ENCODE measurements at regions of chr17 and their contacts with region 1.

Region 1: GRCh38 chr17:2521257-2521656 is 9.6 kb upstream of the METTL16 start:
- DNase-seq: no peak
- H3K4me3 ChIP-seq: no peak overlapping the region
- H3K27ac ChIP-seq: no peak overlapping the region
- H3K4me1 ChIP-seq: no peaks in the 10 kb centered on the region
- H3K27me3 ChIP-seq: no peaks in the 10 kb centered on the region
- CTCF ChIP-seq: no peak

Region 2: GRCh38 chr17:2580661-2581060 is 59.4 kb after region 1 on chr17:
- CTCF ChIA-PET with region 1: no interaction called
- dilution Hi-C with region 1: loop called (anchors 5 kb)
- in situ Hi-C with region 1: no loop called
- intact Hi-C with region 1: no loop called
- DNase-seq: no peak
- H3K4me3 ChIP-seq: no peak overlapping the region
- H3K27ac ChIP-seq: no peak overlapping the region
- H3K4me1 ChIP-seq: no peaks in the 10 kb centered on the region
- H3K27me3 ChIP-seq: no peaks in the 10 kb centered on the region
- CTCF ChIP-seq: no peak

Region 3: GRCh38 chr17:2624292-2624731 is 103.1 kb after region 1 on chr17:
- CTCF ChIA-PET with region 1: no interaction called
- dilution Hi-C with region 1: loop called (anchors 5 kb)
- in situ Hi-C with region 1: no loop called
- intact Hi-C with region 1: no loop called
- DNase-seq: no peak
- H3K4me3 ChIP-seq: no peak overlapping the region
- H3K27ac ChIP-seq: no peak overlapping the region
- H3K4me1 ChIP-seq: no peaks in the 10 kb centered on the region
- H3K27me3 ChIP-seq: no peaks in the 10 kb centered on the region
- CTCF ChIP-seq: no peak